Dorsolateral prefrontal cortex (tissue), 120 donors: ENCODE measurements at regions of chr14 and their contacts with region 1.

Region 1: GRCh38 chr14:71320107-71320733 is 413.0 kb downstream of the PCNX1 start:
- DNase-seq: peak; percentile 85 to 99 (median 96)
- H3K4me3 ChIP-seq: peak within 1 kb of the TSS; percentile 67 to 100 (median 87)
- H3K27ac ChIP-seq: peak within 1 kb of the TSS; percentile 72 to 99 (median 95)
- H3K27me3 ChIP-seq: no peaks in the 10 kb centered on the region
- CTCF ChIP-seq: peak in 35 of 56 donors; percentile 6 to 51 (median 31)

Region 2: DNA sequence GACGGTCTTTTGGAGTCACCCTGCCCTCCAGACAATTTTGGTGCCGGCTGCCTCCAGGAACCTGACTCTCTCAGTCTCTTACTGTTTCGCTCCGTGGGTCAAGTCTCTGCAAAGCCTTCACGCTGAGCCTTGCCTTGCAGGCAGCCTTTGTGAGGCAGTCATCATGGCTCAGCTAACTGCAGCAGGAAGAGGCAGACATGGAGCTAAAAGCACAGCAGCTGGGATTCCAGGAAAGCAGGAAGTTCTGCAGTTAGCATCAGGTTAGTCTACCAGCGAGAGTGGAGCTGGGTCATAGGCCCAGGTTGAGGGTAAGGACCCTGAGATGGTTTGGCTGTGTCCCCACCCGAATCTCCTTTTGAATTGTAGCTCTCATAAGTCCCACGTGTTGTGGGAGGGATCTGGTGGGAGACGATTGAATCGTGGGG is 107.5 kb before region 1 on chr14:
- intact Hi-C with region 1: loop called in 1 of 2 experiments (anchors 10 kb)
- DNase-seq: peak in 5 of 10 donors; percentile 31 to 71 (median 46)
- H3K4me3 ChIP-seq: peak overlapping the region in 47 of 59 donors; percentile 1 to 59 (median 37)
- H3K27ac ChIP-seq: peak overlapping the region in 55 of 59 donors; percentile 7 to 89 (median 72)
- H3K27me3 ChIP-seq: no peaks in the 10 kb centered on the region
- CTCF ChIP-seq: no peak

Region 3: GRCh38 chr14:71399057-71399487 is 78.9 kb after region 1 on chr14:
- intact Hi-C with region 1: no loop called
- DNase-seq: no peak
- H3K4me3 ChIP-seq: no peak overlapping the region
- H3K27ac ChIP-seq: peak overlapping the region in 11 of 59 donors; percentile 5 to 60 (median 32)
- H3K27me3 ChIP-seq: no peaks in the 10 kb centered on the region
- CTCF ChIP-seq: no peak

Region 4: DNA sequence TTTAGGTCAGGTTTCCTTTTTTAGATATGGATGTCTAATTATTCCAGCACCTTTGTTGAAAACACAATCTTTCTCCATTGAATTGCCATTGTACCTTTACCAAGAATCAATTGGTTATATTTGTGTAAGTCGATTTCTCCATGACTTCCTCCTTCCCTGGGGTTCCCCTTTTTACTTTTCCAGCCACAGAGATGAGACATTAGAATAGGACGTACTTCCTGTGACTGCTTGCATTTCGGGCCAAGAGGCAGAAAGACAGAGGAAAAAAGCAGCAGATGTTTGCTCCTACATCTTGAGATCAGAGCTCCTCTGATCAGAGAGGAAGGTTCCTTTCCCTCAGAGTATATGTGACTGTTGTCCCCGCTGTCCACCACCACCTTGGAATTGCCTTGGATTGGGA is 158.3 kb after region 1 on chr14:
- intact Hi-C with region 1: loop called in 1 of 2 experiments (anchors 10 kb)
- DNase-seq: no peak
- H3K4me3 ChIP-seq: peak overlapping the region in 1 of 59 donors; percentile 12
- H3K27ac ChIP-seq: peak overlapping the region in 41 of 59 donors; percentile 8 to 78 (median 48)
- H3K27me3 ChIP-seq: no peaks in the 10 kb centered on the region
- CTCF ChIP-seq: no peak

Region 5: GRCh38 chr14:71555654-71556559 is 235.7 kb after region 1 on chr14:
- intact Hi-C with region 1: no loop called
- DNase-seq: no peak
- H3K4me3 ChIP-seq: no peak overlapping the region
- H3K27ac ChIP-seq: peak overlapping the region in 11 of 59 donors; percentile 3 to 73 (median 27)
- H3K27me3 ChIP-seq: no peaks in the 10 kb centered on the region
- CTCF ChIP-seq: no peak

Region 6: GRCh38 chr14:71647083-71647784 is 327.0 kb after region 1 on chr14:
- intact Hi-C with region 1: loop called in 1 of 2 experiments (anchors 10 kb)
- DNase-seq: no peak
- H3K4me3 ChIP-seq: no peak overlapping the region
- H3K27ac ChIP-seq: no peak overlapping the region
- H3K27me3 ChIP-seq: no peaks in the 10 kb centered on the region
- CTCF ChIP-seq: no peak

Region 7: DNA sequence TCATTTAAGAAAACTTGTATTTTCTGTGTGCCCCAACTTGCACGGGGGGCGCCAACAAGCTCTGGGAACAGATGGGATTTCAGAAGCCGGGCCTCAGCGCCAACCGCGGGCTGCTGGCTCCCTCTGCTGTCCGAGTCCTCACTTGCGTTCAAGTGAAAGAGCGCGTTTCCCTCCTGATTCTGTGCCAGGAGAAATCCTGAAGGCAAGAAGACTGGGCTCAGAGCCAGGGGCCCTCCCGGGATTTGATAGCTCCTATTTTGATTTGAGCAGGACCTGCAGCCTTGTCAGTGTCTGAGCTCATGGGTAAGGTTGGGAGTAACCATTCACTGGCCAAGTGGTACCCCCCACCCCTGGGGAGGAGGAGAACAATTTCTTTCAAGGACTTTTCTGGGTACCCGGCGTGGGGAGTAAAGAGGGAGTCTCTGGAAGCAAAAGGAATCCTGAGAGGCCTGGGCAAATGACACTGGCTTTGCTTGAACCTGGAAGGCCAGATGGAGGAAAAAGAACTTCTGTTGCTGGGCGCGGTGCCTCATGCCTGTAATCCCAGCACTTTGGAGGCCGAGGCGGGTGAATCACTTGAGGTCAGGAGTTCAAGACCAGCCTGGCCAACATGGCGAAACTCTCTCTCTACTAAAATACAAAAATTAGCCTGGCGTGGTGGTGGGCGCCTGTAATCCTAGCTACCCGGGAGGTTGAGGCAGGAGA is 433.1 kb after region 1 on chr14:
- intact Hi-C with region 1: loop called (anchors 5 kb)
- DNase-seq: peak; percentile 78 to 89 (median 84)
- H3K4me3 ChIP-seq: peak overlapping the region in 47 of 59 donors; percentile 3 to 64 (median 36)
- H3K27ac ChIP-seq: peak overlapping the region in 1 of 59 donors; percentile 10
- H3K27me3 ChIP-seq: no peaks in the 10 kb centered on the region
- CTCF ChIP-seq: peak; percentile 72 to 99 (median 97)